ENCODE measurements at regions of chr10 and their contacts with region 1.

Region 1: GRCh38 chr10:99620713-99621453 is 644 bp upstream of the SLC25A28 start:
- DNase-seq: peak; percentile 91
- H3K4me3 Mint-ChIP-seq: peak overlapping the region; percentile 80
- H3K27ac Mint-ChIP-seq: peak overlapping the region; percentile 97
- H3K4me1 Mint-ChIP-seq: peaks cover 39% of the 10 kb centered on the region
- H3K27me3 Mint-ChIP-seq: no peaks in the 10 kb centered on the region

Region 2: GRCh38 chr10:97640174-97640867 is 1980.6 kb before region 1 on chr10 and contains the start of gene PI4K2A:
- intact Hi-C with region 1: loop called (anchors 2 kb)
- DNase-seq: peak; percentile 99
- H3K4me3 Mint-ChIP-seq: peak within 1 kb of the TSS; percentile 96
- H3K27ac Mint-ChIP-seq: peak within 1 kb of the TSS; percentile 86
- H3K4me1 Mint-ChIP-seq: peaks cover 23% of the 10 kb centered on the region
- H3K27me3 Mint-ChIP-seq: peaks cover 1% of the 10 kb centered on the region
- total RNA-seq, gene PI4K2A: 19.3 and 19.7 TPM in 2 replicates

Region 3: GRCh38 chr10:98242823-98243222 is 1378.1 kb before region 1 on chr10:
- intact Hi-C with region 1: no loop called
- DNase-seq: no peak
- H3K4me3 Mint-ChIP-seq: no peak overlapping the region
- H3K27ac Mint-ChIP-seq: peak overlapping the region; percentile 17
- H3K4me1 Mint-ChIP-seq: no peaks in the 10 kb centered on the region
- H3K27me3 Mint-ChIP-seq: no peaks in the 10 kb centered on the region

Region 4: GRCh38 chr10:99430451-99431189 is 190.3 kb before region 1 on chr10 and contains the start of gene GOT1:
- intact Hi-C with region 1: loop called (anchors 1 kb)
- DNase-seq: peak; percentile 93
- H3K4me3 Mint-ChIP-seq: peak within 1 kb of the TSS; percentile 99
- H3K27ac Mint-ChIP-seq: peak within 1 kb of the TSS; percentile 94
- H3K4me1 Mint-ChIP-seq: peaks cover 26% of the 10 kb centered on the region
- H3K27me3 Mint-ChIP-seq: peaks cover 3% of the 10 kb centered on the region
- total RNA-seq, gene GOT1: 35.9 and 36.1 TPM in 2 replicates

Region 5: GRCh38 chr10:99520040-99520846 is 100.6 kb before region 1 on chr10:
- intact Hi-C with region 1: no loop called
- DNase-seq: no peak
- H3K4me3 Mint-ChIP-seq: no peak overlapping the region
- H3K27ac Mint-ChIP-seq: no peak overlapping the region
- H3K4me1 Mint-ChIP-seq: no peaks in the 10 kb centered on the region
- H3K27me3 Mint-ChIP-seq: peaks cover 43% of the 10 kb centered on the region

Region 6: DNA sequence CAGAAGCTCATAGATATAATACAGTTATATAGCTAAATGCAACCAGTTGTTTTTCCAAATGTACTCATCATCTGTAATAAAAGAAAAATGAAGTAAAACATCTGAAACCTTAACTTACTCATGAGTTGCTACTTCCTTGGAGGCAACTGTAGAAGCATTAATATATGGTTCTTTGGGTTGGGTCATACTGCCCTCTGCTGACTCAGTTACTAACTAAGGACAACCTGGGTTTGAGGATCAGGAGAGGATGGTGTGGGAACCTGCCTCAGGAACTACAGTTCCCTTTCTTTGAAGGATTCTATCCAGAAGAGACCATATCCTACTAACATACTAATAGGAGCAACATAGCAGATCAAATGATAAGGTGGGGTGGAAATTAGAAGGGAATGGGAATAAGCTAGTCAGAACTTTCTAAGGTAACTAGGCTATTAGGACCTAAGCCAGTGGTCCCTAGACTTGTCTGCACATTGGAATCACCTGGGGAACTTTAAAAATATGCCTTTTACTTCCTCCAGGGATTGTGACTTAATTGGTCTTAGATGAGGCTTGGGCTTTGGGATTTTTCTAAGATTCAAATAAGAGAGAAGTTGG is 90.3 kb after region 1 on chr10:
- intact Hi-C with region 1: loop called (anchors 2 kb)
- DNase-seq: peak; percentile 10
- H3K4me3 Mint-ChIP-seq: no peak overlapping the region
- H3K27ac Mint-ChIP-seq: no peak overlapping the region
- H3K4me1 Mint-ChIP-seq: peaks cover 8% of the 10 kb centered on the region
- H3K27me3 Mint-ChIP-seq: no peaks in the 10 kb centered on the region

Region 7: DNA sequence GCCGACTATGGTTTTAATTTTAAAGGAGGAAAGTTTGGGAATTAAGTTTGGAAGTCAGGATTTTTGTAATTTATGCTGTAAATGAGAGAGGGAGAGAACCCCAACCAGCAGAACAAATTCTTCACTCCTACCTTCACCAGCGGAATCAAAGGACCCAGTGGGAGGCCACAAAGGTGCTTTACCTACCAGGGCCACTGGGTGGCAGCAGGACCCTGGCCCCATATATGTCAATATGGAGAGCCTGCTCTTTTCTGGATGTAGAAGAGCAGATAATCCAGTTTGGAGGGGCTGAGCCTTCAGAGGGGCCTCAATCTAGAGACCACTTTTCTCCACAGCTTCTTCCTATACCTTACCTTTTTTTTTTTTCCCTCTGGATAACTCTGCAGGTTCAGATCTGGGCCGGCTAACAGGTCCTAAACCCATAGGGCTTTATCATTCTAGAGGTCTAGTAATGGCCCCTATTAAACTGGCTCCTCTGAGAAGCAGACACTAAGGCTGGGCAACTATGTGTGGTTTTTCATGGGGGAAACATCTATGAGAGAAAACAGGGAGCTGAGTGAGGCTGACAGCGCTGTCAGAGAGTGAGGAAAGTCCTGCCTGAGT is 717.7 kb after region 1 on chr10:
- intact Hi-C with region 1: no loop called
- DNase-seq: peak; percentile 67
- H3K4me3 Mint-ChIP-seq: no peak overlapping the region
- H3K27ac Mint-ChIP-seq: no peak overlapping the region
- H3K4me1 Mint-ChIP-seq: peaks cover 35% of the 10 kb centered on the region
- H3K27me3 Mint-ChIP-seq: peaks cover 17% of the 10 kb centered on the region

Region 8: DNA sequence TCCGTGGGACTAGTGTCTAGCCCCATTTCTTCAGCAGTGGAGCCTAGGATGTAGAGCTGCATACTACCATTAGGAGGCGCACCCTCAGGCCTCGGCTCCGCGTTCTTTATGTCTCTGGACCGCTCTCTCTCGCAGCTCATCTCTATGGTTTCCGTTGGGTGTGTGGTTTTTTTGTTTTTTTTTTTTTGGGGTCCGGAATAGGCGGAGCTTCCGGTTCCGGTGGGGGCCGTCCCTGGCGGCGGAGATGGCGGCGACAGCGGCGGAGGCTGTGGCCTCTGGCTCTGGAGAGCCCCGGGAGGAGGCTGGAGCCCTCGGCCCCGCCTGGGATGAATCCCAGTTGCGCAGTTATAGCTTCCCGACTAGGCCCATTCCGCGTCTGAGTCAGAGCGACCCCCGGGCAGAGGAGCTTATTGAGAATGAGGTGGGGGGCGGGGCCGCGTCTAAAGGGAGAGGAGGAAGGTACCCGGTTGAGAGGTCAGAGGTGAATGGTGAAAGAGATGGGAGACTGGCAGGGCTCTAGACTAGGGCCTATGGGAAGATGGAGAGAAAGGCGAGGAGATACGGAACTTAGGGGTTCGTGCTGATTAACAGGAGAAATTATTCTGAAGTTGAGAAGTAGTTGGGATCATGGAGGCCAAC is 915.0 kb after region 1 on chr10 and contains the start of gene HIF1AN:
- intact Hi-C with region 1: loop called (anchors 10 kb)
- DNase-seq: peak; percentile 90
- H3K4me3 Mint-ChIP-seq: no peak within 1 kb of the TSS
- H3K27ac Mint-ChIP-seq: no peak within 1 kb of the TSS
- H3K4me1 Mint-ChIP-seq: peaks cover 16% of the 10 kb centered on the region
- H3K27me3 Mint-ChIP-seq: no peaks in the 10 kb centered on the region
- total RNA-seq, gene HIF1AN: 46.5 and 54.1 TPM in 2 replicates

Measured in activated T-helper 1 cell treated with anti-CD3 and anti-CD28 coated beads, Interleukin-12 subunit alpha, Interleukin-12 subunit beta, Interleukin-2, Interleukin-4 antibody, amounts not matched to agents 30 ng/mL and 10 ng/mL and 1 ng/mL, durations not matched to agents 14 hours and 24 hours and 36 hours (primary cell).